CD8-positive, alpha-beta T cell (primary cell): ENCODE measurements at regions of chr3 and their contacts with region 1.

Region 1: GRCh38 chr3:43162230-43163084 is 56.6 kb upstream of the POMGNT2 start:
- DNase-seq: peak; percentile 26 to 84 (median 62)
- ATAC-seq: peak; percentile 94
- H3K4me3 ChIP-seq: peak overlapping the region; percentile 18 to 30
- H3K4me3 Mint-ChIP-seq: peak overlapping the region; percentile 82
- H3K27ac ChIP-seq: peak overlapping the region; percentile 64 to 79
- H3K27ac Mint-ChIP-seq: peak overlapping the region; percentile 100
- H3K4me1 ChIP-seq: peaks cover 26% of the 10 kb centered on the region
- H3K4me1 Mint-ChIP-seq: peaks cover 28% of the 10 kb centered on the region
- H3K27me3 ChIP-seq: no peaks in the 10 kb centered on the region
- H3K27me3 Mint-ChIP-seq: no peaks in the 10 kb centered on the region
- CTCF ChIP-seq: peak; percentile 67

Region 2: DNA sequence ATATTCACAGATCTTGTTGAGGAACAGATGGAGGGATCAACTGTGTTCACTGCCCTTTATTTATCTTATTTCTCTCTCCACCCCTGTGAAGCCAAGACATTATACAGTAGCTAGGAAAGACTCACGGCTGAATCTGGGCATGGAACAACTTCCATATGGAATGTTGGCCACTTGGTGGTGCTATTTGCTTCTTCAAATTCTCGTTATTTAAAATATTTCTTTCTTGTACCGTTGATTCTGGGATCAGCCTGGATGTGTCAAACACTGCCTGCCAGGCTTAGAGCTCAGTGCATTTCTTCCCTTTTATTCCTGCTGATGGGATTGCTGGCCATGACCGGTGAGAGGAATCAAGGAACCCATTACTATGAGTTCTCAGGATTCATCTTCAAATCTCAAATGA is 200.8 kb before region 1 on chr3:
- CTCF ChIA-PET with region 1: interaction called, 37 read pairs
- POLR2A ChIA-PET with region 1: interaction called, 7 read pairs
- intact Hi-C with region 1: loop called in 1 of 2 experiments (anchors 1 kb)
- DNase-seq: peak in 4 of 9 experiments; percentile 24 to 65 (median 42)
- ATAC-seq: no peak
- H3K4me3 ChIP-seq: no peak overlapping the region
- H3K4me3 Mint-ChIP-seq: no peak overlapping the region
- H3K27ac ChIP-seq: no peak overlapping the region
- H3K27ac Mint-ChIP-seq: no peak overlapping the region
- H3K4me1 ChIP-seq: peaks cover 20% of the 10 kb centered on the region
- H3K4me1 Mint-ChIP-seq: peaks cover 29% of the 10 kb centered on the region
- H3K27me3 ChIP-seq: no peaks in the 10 kb centered on the region
- H3K27me3 Mint-ChIP-seq: no peaks in the 10 kb centered on the region
- CTCF ChIP-seq: peak; percentile 53

Region 3: GRCh38 chr3:43194490-43195114 is 32.1 kb after region 1 on chr3:
- CTCF ChIA-PET with region 1: interaction called, 12 read pairs
- POLR2A ChIA-PET with region 1: interaction called, 6 read pairs
- intact Hi-C with region 1: loop called in 1 of 2 experiments (anchors 1 kb)
- DNase-seq: peak in 8 of 9 experiments; percentile 16 to 72 (median 50)
- ATAC-seq: peak; percentile 90
- H3K4me3 ChIP-seq: no peak overlapping the region
- H3K4me3 Mint-ChIP-seq: peak overlapping the region; percentile 59
- H3K27ac ChIP-seq: peak overlapping the region; percentile 43 to 78
- H3K27ac Mint-ChIP-seq: peak overlapping the region; percentile 97
- H3K4me1 ChIP-seq: peaks cover 80% of the 10 kb centered on the region
- H3K4me1 Mint-ChIP-seq: peaks cover 88% of the 10 kb centered on the region
- H3K27me3 ChIP-seq: no peaks in the 10 kb centered on the region
- H3K27me3 Mint-ChIP-seq: no peaks in the 10 kb centered on the region
- CTCF ChIP-seq: no peak

Region 4: DNA sequence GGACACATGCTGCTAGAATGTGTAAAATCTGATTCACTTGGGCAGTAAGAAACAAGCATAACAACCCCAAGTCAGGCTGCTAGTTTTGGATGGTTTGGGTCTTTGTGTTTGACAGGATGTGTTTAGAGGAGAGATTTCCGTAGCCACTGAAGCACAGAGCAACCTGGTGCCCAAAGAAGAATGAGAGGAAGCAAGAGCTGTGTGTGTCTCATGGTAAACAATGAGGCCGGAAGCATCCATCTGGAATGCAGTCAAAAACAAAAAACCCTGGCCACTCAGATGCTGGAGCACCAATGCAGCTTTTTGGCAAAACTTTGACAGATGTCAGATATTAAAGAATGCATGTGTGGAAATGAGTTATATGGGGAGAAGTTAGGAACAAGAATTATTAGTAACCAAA is 84.5 kb after region 1 on chr3:
- CTCF ChIA-PET with region 1: interaction called, 11 read pairs
- POLR2A ChIA-PET with region 1: no interaction called
- intact Hi-C with region 1: no loop called
- DNase-seq: peak in 3 of 9 experiments; percentile 25 to 66 (median 45)
- ATAC-seq: peak; percentile 56
- H3K4me3 ChIP-seq: no peak overlapping the region
- H3K4me3 Mint-ChIP-seq: peak overlapping the region; percentile 53
- H3K27ac ChIP-seq: peak overlapping the region in 1 of 2 experiments; percentile 42
- H3K27ac Mint-ChIP-seq: peak overlapping the region; percentile 86
- H3K4me1 ChIP-seq: peaks cover 50% of the 10 kb centered on the region
- H3K4me1 Mint-ChIP-seq: peaks cover 64% of the 10 kb centered on the region
- H3K27me3 ChIP-seq: no peaks in the 10 kb centered on the region
- H3K27me3 Mint-ChIP-seq: no peaks in the 10 kb centered on the region
- CTCF ChIP-seq: no peak

Region 5: GRCh38 chr3:43334976-43335375 is 172.5 kb after region 1 on chr3:
- CTCF ChIA-PET with region 1: interaction called, 14 read pairs
- POLR2A ChIA-PET with region 1: no interaction called
- intact Hi-C with region 1: no loop called
- DNase-seq: no peak
- ATAC-seq: no peak
- H3K4me3 ChIP-seq: no peak overlapping the region
- H3K4me3 Mint-ChIP-seq: no peak overlapping the region
- H3K27ac ChIP-seq: no peak overlapping the region
- H3K27ac Mint-ChIP-seq: no peak overlapping the region
- H3K4me1 ChIP-seq: peaks cover 22% of the 10 kb centered on the region
- H3K4me1 Mint-ChIP-seq: peaks cover 35% of the 10 kb centered on the region
- H3K27me3 ChIP-seq: no peaks in the 10 kb centered on the region
- H3K27me3 Mint-ChIP-seq: no peaks in the 10 kb centered on the region
- CTCF ChIP-seq: no peak

Region 6: DNA sequence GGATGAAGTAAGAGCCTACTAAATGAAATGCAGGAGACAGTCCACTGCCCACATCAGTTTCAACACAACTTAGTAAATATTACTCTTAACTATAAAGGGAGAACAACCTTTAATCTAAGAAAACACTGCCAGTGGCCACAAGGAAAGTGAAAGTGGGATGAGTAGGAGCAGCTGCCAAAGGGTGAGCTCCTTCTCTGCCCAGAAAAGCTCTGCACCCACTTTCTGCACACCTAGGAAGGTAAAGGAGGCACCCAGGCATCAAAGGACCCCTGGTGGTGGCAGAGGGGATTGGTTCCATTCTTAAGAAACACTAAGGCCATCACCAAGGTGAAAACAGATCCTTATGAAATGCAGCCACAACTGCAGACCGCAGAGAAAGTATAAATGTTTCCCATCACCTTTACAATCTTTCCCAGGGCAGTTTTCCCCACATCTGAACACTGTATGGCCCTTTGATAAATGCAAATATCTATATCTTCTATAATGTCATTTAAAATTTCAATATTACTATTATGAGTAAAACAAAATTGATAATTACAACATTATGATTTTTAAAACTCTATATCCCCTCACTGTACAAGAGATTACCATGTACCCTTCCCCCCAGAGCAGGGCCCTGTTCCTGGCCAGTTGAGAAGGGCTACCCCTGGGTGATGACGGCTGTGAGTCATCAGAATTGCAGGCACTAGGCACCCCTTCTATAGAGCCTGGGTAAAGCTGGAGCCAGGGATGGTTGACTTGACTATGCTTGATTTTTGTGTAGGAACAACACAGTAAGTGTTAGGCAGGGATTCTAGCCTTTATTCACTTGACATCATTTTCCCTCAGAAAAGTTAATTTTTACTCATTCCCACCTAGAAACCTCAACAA is 215.8 kb after region 1 on chr3:
- CTCF ChIA-PET with region 1: interaction called, 62 read pairs
- POLR2A ChIA-PET with region 1: interaction called, 3 read pairs
- intact Hi-C with region 1: loop called (anchors 1 kb)
- DNase-seq: peak; percentile 54 to 87 (median 78)
- ATAC-seq: peak; percentile 99
- H3K4me3 ChIP-seq: no peak overlapping the region
- H3K4me3 Mint-ChIP-seq: no peak overlapping the region
- H3K27ac ChIP-seq: no peak overlapping the region
- H3K27ac Mint-ChIP-seq: peak overlapping the region; percentile 72
- H3K4me1 ChIP-seq: peaks cover 16% of the 10 kb centered on the region
- H3K4me1 Mint-ChIP-seq: peaks cover 31% of the 10 kb centered on the region
- H3K27me3 ChIP-seq: no peaks in the 10 kb centered on the region
- H3K27me3 Mint-ChIP-seq: no peaks in the 10 kb centered on the region
- CTCF ChIP-seq: peak; percentile 79

Region 7: GRCh38 chr3:43621656-43622432 is 459.4 kb after region 1 on chr3 and contains the start of gene ANO10:
- CTCF ChIA-PET with region 1: no interaction called
- POLR2A ChIA-PET with region 1: no interaction called
- intact Hi-C with region 1: loop called in 1 of 2 experiments (anchors 10 kb)
- DNase-seq: peak; percentile 85 to 97 (median 95)
- ATAC-seq: peak; percentile 94
- H3K4me3 ChIP-seq: peak within 1 kb of the TSS; percentile 69 to 83
- H3K4me3 Mint-ChIP-seq: peak within 1 kb of the TSS; percentile 87
- H3K27ac ChIP-seq: peak within 1 kb of the TSS; percentile 46
- H3K27ac Mint-ChIP-seq: peak within 1 kb of the TSS; percentile 76
- H3K4me1 ChIP-seq: peaks cover 13% of the 10 kb centered on the region
- H3K4me1 Mint-ChIP-seq: peaks cover 17% of the 10 kb centered on the region
- H3K27me3 ChIP-seq: no peaks in the 10 kb centered on the region
- H3K27me3 Mint-ChIP-seq: no peaks in the 10 kb centered on the region
- CTCF ChIP-seq: no peak
- total RNA-seq, gene ANO10: 6.1 to 7.0 TPM